Activated CD8-positive, alpha-beta memory T cell treated with anti-CD3 and anti-CD28 coated beads, Interleukin-2, amount 10 ng/mL, durations not matched to agents 7 days and 5 days (primary cell): ENCODE measurements at regions of chr19 and their contacts with region 1.

Region 1: GRCh38 chr19:35154525-35155406 is at the start of gene FXYD5:
- DNase-seq: peak; percentile 80
- ATAC-seq: peak; percentile 79
- H3K4me3 Mint-ChIP-seq: peak within 1 kb of the TSS; percentile 97
- H3K27ac Mint-ChIP-seq: peak within 1 kb of the TSS; percentile 97
- H3K4me1 Mint-ChIP-seq: peaks cover 42% of the 10 kb centered on the region
- H3K27me3 Mint-ChIP-seq: peaks cover 4% of the 10 kb centered on the region
- total RNA-seq, gene FXYD5: 262 to 354 TPM

Region 2: DNA sequence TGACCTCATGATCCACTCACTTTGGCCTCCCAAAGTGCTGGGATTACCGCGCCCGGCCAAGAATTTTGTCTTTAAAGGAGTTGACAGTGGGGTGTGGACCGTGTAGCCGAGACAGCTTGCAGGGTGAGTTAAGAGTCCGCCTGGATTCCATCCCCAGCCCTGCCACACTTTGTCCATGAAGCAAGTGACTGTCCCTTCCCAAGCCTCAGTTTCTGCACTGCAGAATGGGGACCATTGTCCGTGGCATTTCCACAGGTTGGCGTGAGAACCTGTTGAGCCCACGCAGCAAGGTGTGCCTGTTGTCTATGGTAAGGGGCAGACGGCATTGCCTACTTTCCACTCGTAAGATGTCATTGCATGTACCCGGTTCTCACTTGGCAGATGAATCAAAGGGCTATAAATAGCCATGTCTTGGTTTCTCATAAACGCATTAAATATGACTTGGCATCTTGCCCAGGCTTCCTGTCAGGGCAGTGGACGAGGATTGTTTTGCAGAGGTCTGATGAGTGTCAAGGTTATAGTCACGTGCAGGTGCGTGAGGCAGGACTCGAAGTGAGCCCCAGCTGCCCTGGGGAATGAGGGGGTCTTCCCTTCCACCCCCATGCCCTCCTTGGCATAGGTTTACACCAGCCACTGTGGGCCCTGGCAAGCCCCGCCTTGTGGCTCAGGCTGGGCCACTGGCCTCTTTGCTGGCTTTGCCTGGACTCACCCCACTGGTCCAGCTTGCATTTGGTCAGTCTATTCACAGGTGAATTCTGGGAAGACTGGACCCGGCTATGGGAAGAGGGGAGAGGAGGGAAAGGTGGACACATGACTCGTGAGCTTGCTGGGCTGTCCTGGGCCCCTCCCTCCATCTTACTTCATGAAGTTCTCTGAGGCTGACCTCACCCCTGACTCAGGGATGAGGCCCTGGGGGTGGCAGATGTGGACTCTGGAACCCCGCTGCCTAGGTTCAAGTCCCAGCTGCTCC is 59.2 kb after region 1 on chr19:
- CTCF ChIA-PET with region 1: interaction called, 14 read pairs
- DNase-seq: peak; percentile 84
- ATAC-seq: peak; percentile 45
- H3K4me3 Mint-ChIP-seq: no peak overlapping the region
- H3K27ac Mint-ChIP-seq: peak overlapping the region; percentile 98
- H3K4me1 Mint-ChIP-seq: peaks cover 64% of the 10 kb centered on the region
- H3K27me3 Mint-ChIP-seq: no peaks in the 10 kb centered on the region